ENCODE measurements at regions of chr1 and their contacts with region 1.

Region 1: DNA sequence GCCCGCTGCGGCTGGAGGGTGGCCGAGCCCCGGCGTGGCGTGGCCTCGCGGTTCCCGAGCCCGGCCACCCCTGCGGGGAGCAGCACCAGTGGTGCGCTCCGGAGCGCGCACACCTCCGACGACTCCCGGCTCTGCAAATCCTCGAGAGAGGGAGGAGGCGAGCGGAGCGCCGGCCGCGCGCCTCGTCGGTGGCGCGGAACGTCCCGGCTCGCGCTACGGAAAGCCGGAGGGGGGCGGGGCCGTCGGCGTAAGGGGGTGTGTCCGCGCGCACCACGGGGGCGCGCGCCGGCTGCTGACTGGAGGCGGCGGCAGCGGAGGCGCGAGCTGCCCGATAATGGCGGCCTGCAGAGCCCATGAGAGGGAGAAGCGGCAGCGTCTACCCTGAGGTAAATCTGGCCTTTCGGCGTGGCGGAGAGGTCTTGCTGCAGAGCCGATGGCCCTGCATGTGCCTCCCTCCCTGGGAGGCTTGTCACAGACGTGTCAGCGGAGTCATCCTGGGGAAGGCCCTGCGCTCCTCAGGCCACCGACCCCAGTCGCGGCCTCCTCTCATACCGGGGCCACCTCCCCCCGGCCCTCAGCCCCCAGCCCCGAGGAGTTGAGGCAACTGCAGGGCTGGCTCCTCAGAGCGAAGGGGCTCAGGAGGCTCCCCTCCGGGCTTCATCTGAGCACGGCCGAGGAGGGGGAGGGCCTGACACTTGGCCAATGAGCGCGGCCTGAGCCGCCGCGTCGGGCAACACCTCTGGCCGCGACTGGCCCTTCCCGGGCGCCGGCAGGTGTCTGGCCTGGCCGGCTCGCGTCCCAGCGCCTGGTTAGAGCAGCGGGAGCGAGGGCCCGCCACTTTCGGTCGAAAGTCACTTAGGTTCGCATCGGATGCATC is at the start of gene PDIK1L:
- DNase-seq: peak; percentile 92 to 98 (median 94)
- ATAC-seq: peak; percentile 87
- H3K4me3 ChIP-seq: peak within 1 kb of the TSS; percentile 98 to 99
- H3K4me3 Mint-ChIP-seq: peak within 1 kb of the TSS; percentile 92
- H3K27ac ChIP-seq: peak within 1 kb of the TSS; percentile 65 to 79
- H3K27ac Mint-ChIP-seq: peak within 1 kb of the TSS; percentile 91
- H3K4me1 ChIP-seq: peaks cover 19% of the 10 kb centered on the region
- H3K4me1 Mint-ChIP-seq: peaks cover 30% of the 10 kb centered on the region
- H3K27me3 ChIP-seq: no peaks in the 10 kb centered on the region
- H3K27me3 Mint-ChIP-seq: no peaks in the 10 kb centered on the region
- CTCF ChIP-seq: no peak
- total RNA-seq, gene PDIK1L: 10.2 to 10.8 TPM

Region 2: DNA sequence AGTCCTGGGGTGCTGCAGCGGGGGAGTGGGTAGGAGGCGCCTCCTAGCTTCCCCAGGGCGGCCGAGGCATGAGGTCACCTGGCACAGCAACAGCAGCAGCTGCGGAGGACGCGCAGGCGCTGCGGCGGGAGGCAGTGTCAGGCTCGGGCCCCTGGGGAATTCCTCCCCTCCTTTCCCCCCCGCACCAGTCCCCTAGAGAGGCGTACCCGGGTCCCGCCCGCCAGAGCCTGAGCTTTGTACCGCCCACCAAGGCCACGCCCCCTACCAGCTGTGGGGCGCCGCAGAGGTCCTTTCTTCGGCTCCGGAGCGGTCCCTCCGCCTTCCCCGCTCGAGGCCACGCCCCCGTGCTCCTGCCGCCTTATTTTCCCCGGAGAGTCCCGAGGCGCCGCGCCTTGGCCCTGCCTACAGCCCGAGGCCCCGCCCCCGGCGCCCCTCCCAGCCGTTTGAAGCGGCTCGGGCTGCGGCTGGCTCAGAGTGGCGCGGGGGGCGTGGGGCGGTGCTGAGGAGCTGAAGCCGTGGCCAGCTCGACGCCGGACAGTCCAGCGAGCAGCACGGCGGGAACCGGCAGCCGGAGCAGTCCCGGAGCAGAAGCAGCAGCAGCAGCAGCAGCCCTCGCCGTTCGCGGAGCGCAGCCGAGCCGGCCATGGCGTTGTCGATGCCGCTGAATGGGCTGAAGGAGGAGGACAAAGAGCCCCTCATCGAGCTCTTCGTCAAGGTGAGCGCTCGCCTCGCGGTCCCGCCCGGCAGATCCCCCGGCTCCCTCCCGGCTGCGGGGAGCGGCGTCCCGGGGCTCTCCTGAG is 1366.7 kb before region 1 on chr1 and contains the start of gene CLIC4:
- CTCF ChIA-PET with region 1: no interaction called
- POLR2A ChIA-PET with region 1: no interaction called
- intact Hi-C with region 1: loop called in 1 of 2 experiments (anchors 5 kb)
- DNase-seq: peak; percentile 97 to 100 (median 99)
- ATAC-seq: peak; percentile 92
- H3K4me3 ChIP-seq: peak within 1 kb of the TSS; percentile 52 to 54
- H3K4me3 Mint-ChIP-seq: peak within 1 kb of the TSS; percentile 86
- H3K27ac ChIP-seq: no peak within 1 kb of the TSS
- H3K27ac Mint-ChIP-seq: peak within 1 kb of the TSS; percentile 72
- H3K4me1 ChIP-seq: peaks cover 8% of the 10 kb centered on the region
- H3K4me1 Mint-ChIP-seq: peaks cover 27% of the 10 kb centered on the region
- H3K27me3 ChIP-seq: peaks cover 0 to 3% of the 10 kb centered on the region in 2 experiments
- H3K27me3 Mint-ChIP-seq: peaks cover 6% of the 10 kb centered on the region
- CTCF ChIP-seq: no peak
- total RNA-seq, gene CLIC4: 1.2 to 1.3 TPM

Region 3: DNA sequence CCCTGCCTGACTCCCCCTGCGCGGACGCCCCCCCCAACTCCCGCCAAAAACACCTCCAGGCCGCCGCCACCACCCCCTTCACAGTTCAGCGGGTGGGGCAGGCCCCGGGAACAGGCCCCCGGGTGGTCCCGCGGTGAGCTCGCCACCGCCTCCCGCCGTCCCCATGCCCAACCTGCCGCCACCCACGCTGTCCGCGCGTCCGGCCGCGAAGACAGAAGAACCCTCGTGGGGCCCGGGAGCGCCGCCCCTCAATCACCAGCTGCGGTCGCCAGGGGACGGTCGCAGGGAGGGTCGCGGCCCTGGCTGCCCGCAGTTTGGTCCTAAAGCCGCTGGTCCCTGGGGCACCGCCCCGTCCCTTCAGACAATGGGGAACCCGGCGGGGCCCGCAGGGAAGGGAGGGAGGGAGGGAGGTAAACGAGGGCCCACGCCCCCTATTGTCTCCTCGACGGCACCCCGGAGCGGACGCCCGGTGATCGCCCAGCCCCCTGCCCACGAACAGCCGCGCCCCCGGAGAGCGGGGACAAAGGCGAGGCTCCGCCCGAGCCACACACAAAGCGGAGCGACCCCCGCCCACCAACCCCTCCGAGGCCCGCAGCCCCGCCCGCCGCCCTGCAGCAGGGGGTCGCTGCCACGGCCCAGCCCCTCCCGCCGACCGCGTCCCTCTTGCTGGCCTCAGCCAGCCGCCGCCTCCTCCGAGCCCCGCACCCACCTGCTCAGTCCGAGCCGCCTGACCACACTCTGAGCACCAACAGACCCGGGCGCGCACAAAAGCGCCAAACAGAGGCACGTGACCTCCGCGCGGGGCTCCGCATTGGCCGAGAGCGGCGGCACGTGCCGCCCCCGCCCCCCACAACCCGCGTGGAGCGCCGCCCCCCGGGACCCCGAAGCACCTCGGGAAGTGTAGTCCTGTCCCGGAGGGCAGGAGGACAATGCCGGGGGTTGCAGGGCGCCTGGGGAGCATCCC is 205.8 kb before region 1 on chr1 and contains the start of gene STMN1:
- CTCF ChIA-PET with region 1: no interaction called
- POLR2A ChIA-PET with region 1: no interaction called
- intact Hi-C with region 1: loop called in 1 of 2 experiments (anchors 5 kb)
- DNase-seq: peak; percentile 77 to 93 (median 88)
- ATAC-seq: peak; percentile 72
- H3K4me3 ChIP-seq: peak within 1 kb of the TSS; percentile 63 to 68
- H3K4me3 Mint-ChIP-seq: peak within 1 kb of the TSS; percentile 95
- H3K27ac ChIP-seq: peak within 1 kb of the TSS; percentile 70 to 71
- H3K27ac Mint-ChIP-seq: peak within 1 kb of the TSS; percentile 95
- H3K4me1 ChIP-seq: peaks cover 8% of the 10 kb centered on the region
- H3K4me1 Mint-ChIP-seq: peaks cover 18% of the 10 kb centered on the region
- H3K27me3 ChIP-seq: no peaks in the 10 kb centered on the region
- H3K27me3 Mint-ChIP-seq: no peaks in the 10 kb centered on the region
- CTCF ChIP-seq: no peak
- total RNA-seq, gene STMN1: 18.5 to 19.6 TPM

Region 4: GRCh38 chr1:26138974-26139558 is 27.3 kb after region 1 on chr1:
- CTCF ChIA-PET with region 1: interaction called, 289 read pairs
- POLR2A ChIA-PET with region 1: interaction called, 9 read pairs
- intact Hi-C with region 1: loop called in 1 of 2 experiments (anchors 1 kb)
- DNase-seq: peak in 2 of 9 experiments; percentile 36 to 44
- ATAC-seq: peak; percentile 64
- H3K4me3 ChIP-seq: no peak overlapping the region
- H3K4me3 Mint-ChIP-seq: peak overlapping the region; percentile 26
- H3K27ac ChIP-seq: no peak overlapping the region
- H3K27ac Mint-ChIP-seq: peak overlapping the region; percentile 46
- H3K4me1 ChIP-seq: peaks cover 13% of the 10 kb centered on the region
- H3K4me1 Mint-ChIP-seq: peaks cover 13% of the 10 kb centered on the region
- H3K27me3 ChIP-seq: no peaks in the 10 kb centered on the region
- H3K27me3 Mint-ChIP-seq: no peaks in the 10 kb centered on the region
- CTCF ChIP-seq: no peak

Region 5: DNA sequence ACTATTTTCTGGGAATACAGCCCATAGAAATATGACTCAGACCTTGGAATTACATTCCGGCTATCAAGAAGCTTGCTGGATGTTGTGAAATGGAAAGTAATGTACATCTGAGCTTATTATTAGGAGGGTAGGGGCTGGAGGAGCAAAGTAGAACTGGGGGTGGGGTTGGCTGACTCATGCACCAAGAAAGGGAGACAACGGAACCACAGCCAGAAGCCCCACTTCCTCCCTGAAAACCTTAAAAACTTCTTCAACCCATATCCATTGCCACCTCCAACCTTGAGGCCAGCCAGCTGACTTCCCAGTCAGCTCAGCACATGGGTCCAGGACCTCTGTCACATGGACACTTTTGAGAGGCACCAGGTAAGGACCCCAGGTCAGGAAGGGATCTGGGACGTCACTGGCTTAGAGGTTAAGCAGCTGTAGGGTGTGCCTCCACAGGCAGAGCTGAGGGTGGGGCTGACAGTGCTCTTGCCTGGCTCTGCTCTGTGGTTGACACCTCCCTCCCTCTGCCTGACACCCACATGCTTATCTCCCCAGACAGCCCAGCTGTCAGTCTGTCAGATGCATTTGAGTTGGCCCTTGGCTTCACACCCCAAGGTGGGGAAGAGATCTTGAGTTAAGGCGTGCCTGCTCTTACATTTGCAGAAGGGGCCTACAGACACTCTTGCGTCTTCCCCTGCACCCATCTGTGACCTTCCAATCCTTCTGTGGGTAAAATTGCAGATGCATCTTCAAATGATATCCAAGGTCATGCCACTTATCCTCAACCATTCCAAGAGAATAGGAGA is 266.5 kb after region 1 on chr1:
- CTCF ChIA-PET with region 1: no interaction called
- POLR2A ChIA-PET with region 1: no interaction called
- intact Hi-C with region 1: loop called in 1 of 2 experiments (anchors 1 kb)
- DNase-seq: peak; percentile 63 to 96 (median 85)
- ATAC-seq: peak; percentile 91
- H3K4me3 ChIP-seq: peak overlapping the region; percentile 7 to 19
- H3K4me3 Mint-ChIP-seq: peak overlapping the region; percentile 59
- H3K27ac ChIP-seq: peak overlapping the region; percentile 54 to 76
- H3K27ac Mint-ChIP-seq: peak overlapping the region; percentile 91
- H3K4me1 ChIP-seq: peaks cover 65% of the 10 kb centered on the region
- H3K4me1 Mint-ChIP-seq: peaks cover 68% of the 10 kb centered on the region
- H3K27me3 ChIP-seq: no peaks in the 10 kb centered on the region
- H3K27me3 Mint-ChIP-seq: no peaks in the 10 kb centered on the region
- CTCF ChIP-seq: no peak

Measured in CD8-positive, alpha-beta T cell (primary cell).